ENCODE measurements at regions of chr2 and their contacts with region 1.

Region 1: DNA sequence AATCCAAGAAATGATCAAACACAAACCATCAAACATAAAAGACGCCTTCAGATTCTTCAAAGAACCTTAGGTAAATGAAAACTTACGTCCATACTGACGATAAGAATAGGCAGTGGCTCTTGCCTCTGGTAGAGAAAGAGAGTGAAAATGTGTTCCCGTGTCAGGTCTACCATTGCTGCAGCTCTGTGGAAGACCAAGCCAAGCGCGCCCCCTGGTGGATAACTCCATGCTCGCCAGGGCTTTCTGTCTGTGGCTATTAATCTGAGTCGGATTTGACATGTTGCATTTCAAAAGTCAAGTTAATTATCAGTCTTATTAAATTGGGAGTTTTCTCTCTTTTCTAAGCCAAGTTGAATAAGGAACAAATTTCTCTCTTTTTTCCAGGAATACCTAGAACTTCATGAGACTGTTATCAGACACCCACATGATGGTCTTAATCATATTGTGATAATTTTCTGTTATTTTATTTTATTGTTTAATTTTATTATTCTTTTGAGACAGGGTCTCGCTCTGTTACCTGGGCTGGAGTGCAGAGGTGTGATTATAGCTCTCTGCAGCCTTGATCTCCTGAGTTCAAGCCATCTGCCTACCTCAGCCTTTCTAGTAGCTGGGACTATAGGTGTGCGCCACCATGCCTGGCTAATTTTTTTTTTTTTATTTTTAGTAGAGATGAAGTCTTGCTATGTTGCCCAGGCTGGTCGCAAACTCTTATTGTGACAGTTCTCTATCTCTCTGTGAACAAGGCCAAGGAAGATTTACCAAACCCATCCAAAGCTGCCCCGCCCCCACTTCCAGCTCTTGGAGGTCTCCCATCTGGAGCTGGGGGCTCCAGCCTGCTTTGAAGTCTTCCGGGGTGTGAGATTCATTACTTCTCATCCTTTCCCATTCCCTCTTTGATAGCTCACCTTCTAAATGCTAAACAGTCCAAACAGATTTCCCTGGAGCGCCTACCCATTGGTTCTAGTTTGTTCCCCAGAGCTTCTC is 15.8 kb upstream of the ZAP70 start:
- DNase-seq: peak; percentile 78
- H3K4me3 ChIP-seq: peak overlapping the region in 1 of 2 experiments; percentile 33; a peak in 1 of 4 replicates
- H3K27ac ChIP-seq: no peak overlapping the region
- H3K4me1 ChIP-seq: no peaks in the 10 kb centered on the region; a peak in 1 of 4 replicates
- H3K27me3 ChIP-seq: no peaks in the 10 kb centered on the region
- CTCF ChIP-seq: peak; percentile 96
- EP300 ChIP-seq: no peak
- RAD21 ChIP-seq: peak; percentile 99

Region 2: DNA sequence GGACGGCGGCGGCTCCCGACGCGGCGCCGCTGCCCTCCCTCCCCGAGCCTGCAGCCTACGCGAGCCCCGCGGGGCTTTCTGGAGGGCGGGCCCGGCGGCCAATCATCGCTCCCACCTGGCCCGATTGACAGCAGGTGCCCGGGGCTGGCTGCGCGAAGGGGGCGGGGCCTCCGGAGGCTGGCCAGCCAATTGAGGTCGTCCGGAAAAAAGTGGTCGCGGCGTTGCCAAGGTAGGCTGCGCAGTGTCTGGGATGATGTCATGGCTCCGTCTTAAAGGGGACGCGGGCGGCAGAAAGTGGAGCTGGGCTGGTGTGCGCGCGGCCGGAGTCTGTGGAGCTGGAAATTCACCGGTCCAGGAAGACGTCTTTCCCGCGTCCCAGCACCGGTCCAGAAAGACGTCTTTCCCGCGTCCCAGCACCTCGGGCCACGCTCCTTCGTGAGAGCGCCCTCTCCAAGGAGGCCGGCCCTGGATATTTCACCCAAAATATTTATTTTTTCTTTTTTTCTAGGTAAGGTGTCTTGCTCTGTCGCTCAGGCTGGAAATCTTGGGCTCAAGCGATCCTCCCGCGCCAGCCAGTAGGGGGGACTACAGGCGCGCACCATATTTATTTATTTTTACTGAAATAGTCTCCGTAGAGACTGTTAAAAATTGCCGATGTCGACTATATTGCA is 33.4 kb before region 1 on chr2 and contains the start of gene ACTR1B:
- CTCF ChIA-PET with region 1: interaction called, 88 read pairs
- POLR2A ChIA-PET with region 1: interaction called, 3 read pairs
- DNase-seq: peak; percentile 97
- H3K4me3 ChIP-seq: peak within 1 kb of the TSS; percentile 81 to 89
- H3K27ac ChIP-seq: peak within 1 kb of the TSS; percentile 92 to 95
- H3K4me1 ChIP-seq: peaks cover 15% of the 10 kb centered on the region in 2 experiments; a peak in 3 of 4 replicates
- H3K27me3 ChIP-seq: no peaks in the 10 kb centered on the region
- CTCF ChIP-seq: peak; percentile 76
- EP300 ChIP-seq: no peak; a peak in 1 of 4 replicates
- RAD21 ChIP-seq: peak; percentile 32; the same call in 1 of the 2 replicates
- polyA plus RNA-seq, gene ACTR1B: 51.5 and 55.1 TPM in 2 replicates

Region 3: DNA sequence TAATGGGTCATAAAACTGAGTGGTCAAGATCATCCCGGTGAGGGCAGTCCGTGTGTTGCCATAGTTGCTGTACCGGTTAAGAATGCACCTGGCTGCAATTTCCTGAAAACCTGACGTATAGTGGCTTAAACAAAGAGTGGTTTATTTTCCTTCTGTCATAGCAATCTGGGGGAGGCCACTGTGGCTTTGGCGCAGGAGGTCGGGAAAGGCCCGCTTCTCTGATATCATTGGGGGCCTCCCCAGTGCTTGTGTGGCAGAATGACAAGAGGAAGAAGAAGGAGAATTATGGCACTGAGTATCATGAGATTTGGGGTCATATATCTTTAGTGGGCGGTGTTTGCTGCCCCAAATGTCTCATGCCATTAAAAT is 23.6 kb before region 1 on chr2:
- CTCF ChIA-PET with region 1: interaction called, 26 read pairs
- POLR2A ChIA-PET with region 1: no interaction called
- DNase-seq: no peak
- H3K4me3 ChIP-seq: no peak overlapping the region
- H3K27ac ChIP-seq: no peak overlapping the region
- H3K4me1 ChIP-seq: no peaks in the 10 kb centered on the region
- H3K27me3 ChIP-seq: no peaks in the 10 kb centered on the region
- CTCF ChIP-seq: no peak
- EP300 ChIP-seq: no peak
- RAD21 ChIP-seq: no peak

Region 4: GRCh38 chr2:97713296-97714083 is 15.9 kb after region 1 on chr2 and contains the start of gene ZAP70:
- CTCF ChIA-PET with region 1: interaction called, 90 read pairs
- POLR2A ChIA-PET with region 1: no interaction called
- DNase-seq: no peak
- H3K4me3 ChIP-seq: no peak within 1 kb of the TSS
- H3K27ac ChIP-seq: no peak within 1 kb of the TSS
- H3K4me1 ChIP-seq: peaks cover 0 to 5% of the 10 kb centered on the region in 2 experiments; a peak in 1 of 4 replicates
- H3K27me3 ChIP-seq: no peaks in the 10 kb centered on the region
- CTCF ChIP-seq: no peak
- EP300 ChIP-seq: no peak
- RAD21 ChIP-seq: no peak
- polyA plus RNA-seq, gene ZAP70: 0.05 and 0.08 TPM in 2 replicates

Region 5: DNA sequence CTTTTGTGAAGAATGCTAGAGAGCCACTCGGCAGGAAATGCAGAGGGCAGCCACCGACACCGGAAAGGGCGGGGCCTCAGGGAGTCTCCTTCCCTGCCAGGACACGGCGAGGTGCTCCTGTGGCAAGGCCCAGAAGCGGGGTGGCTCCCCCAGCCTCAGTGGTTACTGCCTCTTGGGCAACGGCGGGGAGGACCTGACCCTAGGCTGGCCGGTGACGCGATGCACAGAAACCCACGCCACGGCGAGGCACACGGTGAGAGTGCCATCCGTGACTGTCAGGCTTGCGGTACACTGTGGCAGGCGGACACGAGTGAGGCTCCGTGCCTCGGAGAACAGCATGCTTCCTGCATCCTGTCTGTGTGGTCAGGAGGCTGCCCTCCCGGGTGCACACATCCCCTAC is 63.6 kb after region 1 on chr2:
- CTCF ChIA-PET with region 1: no interaction called
- POLR2A ChIA-PET with region 1: no interaction called
- DNase-seq: no peak
- H3K4me3 ChIP-seq: no peak overlapping the region
- H3K27ac ChIP-seq: no peak overlapping the region
- H3K4me1 ChIP-seq: no peaks in the 10 kb centered on the region
- H3K27me3 ChIP-seq: no peaks in the 10 kb centered on the region
- CTCF ChIP-seq: no peak
- EP300 ChIP-seq: no peak
- RAD21 ChIP-seq: no peak

Region 6: DNA sequence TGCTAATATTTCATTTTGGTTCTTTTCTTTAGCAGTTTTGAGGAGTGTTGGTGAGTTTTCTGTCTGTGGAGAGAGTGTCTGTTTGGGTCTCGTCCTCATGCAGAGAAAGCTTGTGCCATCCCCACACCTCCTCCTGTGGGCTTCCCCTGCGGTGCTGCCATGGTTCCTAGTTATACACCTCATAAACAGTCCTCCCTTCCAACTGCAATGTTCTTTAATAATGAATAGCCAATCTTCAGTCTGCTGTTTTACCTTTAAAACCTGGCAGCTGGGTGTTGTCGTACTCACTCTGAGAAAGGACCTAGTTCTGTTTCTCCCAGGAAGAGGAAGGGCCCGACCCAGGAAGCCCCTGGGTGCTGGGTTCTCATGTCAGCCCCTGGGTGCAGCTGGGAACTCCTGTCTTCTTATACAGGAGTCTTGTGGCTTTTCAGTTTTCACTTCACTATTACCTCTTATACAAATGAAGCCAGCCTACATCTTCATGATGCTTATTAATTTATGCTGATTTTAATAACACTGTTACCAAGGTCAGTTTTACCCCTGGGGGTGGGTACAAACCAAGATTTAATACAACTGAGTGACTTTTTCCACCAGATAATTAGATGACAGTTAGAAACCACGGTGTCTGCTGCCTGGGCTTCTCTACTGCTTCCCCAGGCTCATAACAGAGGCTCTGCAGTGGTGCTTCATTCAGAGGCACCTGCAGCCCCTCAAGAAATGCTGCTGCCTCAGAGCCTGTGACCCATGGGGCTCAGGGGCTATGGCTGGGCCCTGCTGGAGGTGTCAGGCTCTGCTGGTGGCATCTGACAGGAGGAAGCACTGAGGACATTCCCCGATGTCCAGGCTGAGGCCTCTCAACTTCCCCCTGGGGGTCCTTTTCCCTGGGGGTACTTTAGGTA is 851.6 kb after region 1 on chr2:
- CTCF ChIA-PET with region 1: no interaction called
- POLR2A ChIA-PET with region 1: no interaction called
- DNase-seq: no peak
- H3K4me3 ChIP-seq: no peak overlapping the region
- H3K27ac ChIP-seq: no peak overlapping the region
- H3K4me1 ChIP-seq: no peaks in the 10 kb centered on the region
- H3K27me3 ChIP-seq: no peaks in the 10 kb centered on the region
- CTCF ChIP-seq: no peak
- EP300 ChIP-seq: no peak
- RAD21 ChIP-seq: no peak

Measured in SK-N-SH (cell line).